ENCODE measurements at regions of chr13 and their contacts with region 1.

Region 1: GRCh38 chr13:46288570-46289259 is 77.0 kb downstream of the LRRC63 start:
- DNase-seq: peak; percentile 65
- ATAC-seq: peak; percentile 24
- H3K4me3 ChIP-seq: no peak overlapping the region
- H3K4me3 Mint-ChIP-seq: no peak overlapping the region
- H3K27ac ChIP-seq: no peak overlapping the region
- H3K27ac Mint-ChIP-seq: no peak overlapping the region
- H3K4me1 ChIP-seq: no peaks in the 10 kb centered on the region
- H3K4me1 Mint-ChIP-seq: no peaks in the 10 kb centered on the region
- H3K27me3 ChIP-seq: no peaks in the 10 kb centered on the region
- H3K27me3 Mint-ChIP-seq: no peaks in the 10 kb centered on the region
- CTCF ChIP-seq: peak; percentile 87

Region 2: GRCh38 chr13:45623515-45624090 is 665.1 kb before region 1 on chr13:
- CTCF ChIA-PET with region 1: interaction called, 3 read pairs
- POLR2A ChIA-PET with region 1: no interaction called
- intact Hi-C with region 1: loop called (anchors 5 kb)
- DNase-seq: no peak
- ATAC-seq: no peak
- H3K4me3 ChIP-seq: no peak overlapping the region
- H3K4me3 Mint-ChIP-seq: no peak overlapping the region
- H3K27ac ChIP-seq: no peak overlapping the region
- H3K27ac Mint-ChIP-seq: no peak overlapping the region
- H3K4me1 ChIP-seq: no peaks in the 10 kb centered on the region
- H3K4me1 Mint-ChIP-seq: no peaks in the 10 kb centered on the region
- H3K27me3 ChIP-seq: peaks cover 0 to 18% (median 0%) of the 10 kb centered on the region in 4 experiments
- H3K27me3 Mint-ChIP-seq: peaks cover 53% of the 10 kb centered on the region
- CTCF ChIP-seq: peak; percentile 38

Measured in B cell (primary cell).